ENCODE measurements at regions of chr11 and their contacts with region 1.

Region 1: GRCh38 chr11:45846974-45847910 is at the start of gene CRY2:
- DNase-seq: peak; percentile 99 to 100 (median 100)
- H3K4me3 ChIP-seq: peak within 1 kb of the TSS; percentile 87 to 98 (median 93)
- H3K4me3 Mint-ChIP-seq: peak within 1 kb of the TSS; percentile 85 to 86
- H3K27ac ChIP-seq: peak within 1 kb of the TSS; percentile 94 to 97
- H3K27ac Mint-ChIP-seq: peak within 1 kb of the TSS; percentile 90 to 96 (median 93)
- H3K4me1 ChIP-seq: peaks cover 40 to 41% of the 10 kb centered on the region in 2 donors
- H3K4me1 Mint-ChIP-seq: peaks cover 53% of the 10 kb centered on the region
- H3K27me3 ChIP-seq: peaks cover 0 to 3% of the 10 kb centered on the region in 2 donors
- H3K27me3 Mint-ChIP-seq: peaks cover 5 to 19% (median 9%) of the 10 kb centered on the region in 3 donors
- CTCF ChIP-seq: no peak
- polyA plus RNA-seq, gene CRY2: 5.1 to 12.5 (median 7.2) TPM

Region 2: GRCh38 chr11:45423475-45424120 is 423.6 kb before region 1 on chr11:
- intact Hi-C with region 1: no loop called
- DNase-seq: no peak
- H3K4me3 ChIP-seq: no peak overlapping the region
- H3K4me3 Mint-ChIP-seq: no peak overlapping the region
- H3K27ac ChIP-seq: no peak overlapping the region
- H3K27ac Mint-ChIP-seq: no peak overlapping the region
- H3K4me1 ChIP-seq: no peaks in the 10 kb centered on the region
- H3K4me1 Mint-ChIP-seq: no peaks in the 10 kb centered on the region
- H3K27me3 ChIP-seq: no peaks in the 10 kb centered on the region
- H3K27me3 Mint-ChIP-seq: peaks cover 14 to 22% (median 15%) of the 10 kb centered on the region in 3 donors
- CTCF ChIP-seq: no peak

Region 3: GRCh38 chr11:45804761-45805304 is 42.4 kb before region 1 on chr11 and contains the start of gene SLC35C1:
- intact Hi-C with region 1: loop called (anchors 5 kb)
- DNase-seq: peak; percentile 88 to 93 (median 89)
- H3K4me3 ChIP-seq: peak within 1 kb of the TSS; percentile 90 to 98 (median 92)
- H3K4me3 Mint-ChIP-seq: peak within 1 kb of the TSS; percentile 93 to 95
- H3K27ac ChIP-seq: peak within 1 kb of the TSS; percentile 80 to 87
- H3K27ac Mint-ChIP-seq: peak within 1 kb of the TSS; percentile 87 to 94 (median 91)
- H3K4me1 ChIP-seq: peaks cover 45 to 46% of the 10 kb centered on the region in 2 donors
- H3K4me1 Mint-ChIP-seq: peaks cover 42% of the 10 kb centered on the region
- H3K27me3 ChIP-seq: no peaks in the 10 kb centered on the region
- H3K27me3 Mint-ChIP-seq: peaks cover 0 to 7% (median 6%) of the 10 kb centered on the region in 3 donors
- CTCF ChIP-seq: no peak
- polyA plus RNA-seq, gene SLC35C1: 5.0 to 14.0 (median 12.8) TPM

Region 4: DNA sequence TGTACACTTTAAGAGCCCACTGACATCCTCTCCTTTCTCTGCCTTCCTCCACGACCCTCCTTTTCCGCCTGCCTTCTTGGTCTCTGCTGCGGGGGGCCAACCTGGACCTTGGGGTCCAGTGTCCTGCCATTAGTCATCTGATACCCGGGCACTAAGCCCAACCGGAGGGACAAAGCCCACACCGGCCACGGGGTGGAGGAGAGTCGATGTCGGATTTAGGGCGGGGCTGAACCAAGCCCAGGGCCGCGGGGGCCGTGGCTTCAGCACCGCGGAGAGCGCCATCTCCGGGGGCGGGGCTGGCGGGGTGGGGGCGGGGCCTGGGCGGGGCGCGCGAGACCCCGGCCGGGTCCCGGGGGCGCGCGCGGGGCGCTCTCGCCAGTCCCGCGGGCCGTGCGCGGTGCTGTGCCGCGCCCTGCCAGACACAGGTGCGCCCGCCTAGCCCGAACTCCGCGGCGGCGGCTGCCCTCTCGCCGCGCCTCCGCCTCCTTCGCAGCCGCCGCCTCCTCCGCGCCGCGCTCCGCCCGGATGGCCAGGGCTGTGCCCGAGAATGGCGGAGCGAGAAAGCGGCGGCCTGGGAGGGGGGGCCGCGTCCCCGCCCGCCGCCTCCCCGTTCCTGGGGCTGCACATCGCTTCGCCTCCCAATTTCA is 38.2 kb after region 1 on chr11 and contains the start of gene MAPK8IP1:
- intact Hi-C with region 1: no loop called
- DNase-seq: peak; percentile 12 to 27 (median 12)
- H3K4me3 ChIP-seq: peak within 1 kb of the TSS in 1 of 3 experiments; percentile 63
- H3K4me3 Mint-ChIP-seq: peak within 1 kb of the TSS; percentile 64 to 89
- H3K27ac ChIP-seq: no peak within 1 kb of the TSS
- H3K27ac Mint-ChIP-seq: no peak within 1 kb of the TSS
- H3K4me1 ChIP-seq: peaks cover 5 to 6% of the 10 kb centered on the region in 2 donors
- H3K4me1 Mint-ChIP-seq: peaks cover 3% of the 10 kb centered on the region
- H3K27me3 ChIP-seq: peaks cover 14 to 26% of the 10 kb centered on the region in 2 donors
- H3K27me3 Mint-ChIP-seq: peaks cover 16 to 46% (median 29%) of the 10 kb centered on the region in 3 donors
- CTCF ChIP-seq: no peak
- polyA plus RNA-seq, gene MAPK8IP1: 0.93 TPM in 1 of 3 donors, not detected in the others

Region 5: DNA sequence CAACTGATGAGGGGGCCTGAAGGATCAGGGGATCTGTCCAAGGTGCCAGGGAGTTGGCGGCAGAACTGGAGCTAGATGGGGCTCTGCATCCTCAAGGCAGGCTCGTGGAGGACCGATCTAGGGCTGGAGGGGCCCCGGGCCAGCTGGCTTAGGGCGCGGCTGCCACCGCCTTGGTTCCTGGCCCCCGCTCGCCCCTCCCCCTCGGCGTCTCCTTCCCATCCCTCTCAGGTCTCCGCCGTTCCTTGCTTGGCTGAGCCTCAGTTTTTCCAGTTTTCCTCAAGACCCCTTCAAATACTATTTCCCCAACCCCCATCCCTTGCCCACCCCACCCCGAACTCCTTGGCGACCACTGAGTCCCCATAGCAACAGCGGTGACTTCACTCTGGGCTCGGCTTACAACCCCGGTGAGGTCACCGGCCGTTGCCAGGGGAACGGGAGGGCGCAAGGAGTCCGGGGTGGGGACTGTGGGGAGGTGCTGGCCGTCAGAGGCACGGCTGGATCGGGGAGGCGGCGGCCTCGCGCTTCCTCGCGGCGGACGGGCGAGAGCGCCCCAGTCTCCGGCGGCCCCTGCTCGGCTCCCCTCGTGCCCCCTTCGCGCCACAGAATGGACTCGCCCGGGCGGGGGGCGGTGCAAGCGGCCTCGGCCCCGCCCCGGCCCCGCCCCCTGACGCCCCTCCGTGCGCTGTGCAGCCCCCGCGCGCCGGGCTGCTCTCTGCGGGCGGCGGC is 52.4 kb after region 1 on chr11:
- intact Hi-C with region 1: no loop called
- DNase-seq: peak; percentile 64 to 85 (median 73)
- H3K4me3 ChIP-seq: peak overlapping the region in 2 of 3 experiments; percentile 6 to 61
- H3K4me3 Mint-ChIP-seq: peak overlapping the region; percentile 62 to 79
- H3K27ac ChIP-seq: no peak overlapping the region
- H3K27ac Mint-ChIP-seq: peak overlapping the region in 5 of 7 donors; percentile 67 to 93 (median 77)
- H3K4me1 ChIP-seq: peaks cover 11 to 15% of the 10 kb centered on the region in 2 donors
- H3K4me1 Mint-ChIP-seq: peaks cover 7% of the 10 kb centered on the region
- H3K27me3 ChIP-seq: peaks cover 24 to 58% of the 10 kb centered on the region in 2 donors
- H3K27me3 Mint-ChIP-seq: peaks cover 55 to 83% (median 63%) of the 10 kb centered on the region in 3 donors
- CTCF ChIP-seq: no peak

Region 6: DNA sequence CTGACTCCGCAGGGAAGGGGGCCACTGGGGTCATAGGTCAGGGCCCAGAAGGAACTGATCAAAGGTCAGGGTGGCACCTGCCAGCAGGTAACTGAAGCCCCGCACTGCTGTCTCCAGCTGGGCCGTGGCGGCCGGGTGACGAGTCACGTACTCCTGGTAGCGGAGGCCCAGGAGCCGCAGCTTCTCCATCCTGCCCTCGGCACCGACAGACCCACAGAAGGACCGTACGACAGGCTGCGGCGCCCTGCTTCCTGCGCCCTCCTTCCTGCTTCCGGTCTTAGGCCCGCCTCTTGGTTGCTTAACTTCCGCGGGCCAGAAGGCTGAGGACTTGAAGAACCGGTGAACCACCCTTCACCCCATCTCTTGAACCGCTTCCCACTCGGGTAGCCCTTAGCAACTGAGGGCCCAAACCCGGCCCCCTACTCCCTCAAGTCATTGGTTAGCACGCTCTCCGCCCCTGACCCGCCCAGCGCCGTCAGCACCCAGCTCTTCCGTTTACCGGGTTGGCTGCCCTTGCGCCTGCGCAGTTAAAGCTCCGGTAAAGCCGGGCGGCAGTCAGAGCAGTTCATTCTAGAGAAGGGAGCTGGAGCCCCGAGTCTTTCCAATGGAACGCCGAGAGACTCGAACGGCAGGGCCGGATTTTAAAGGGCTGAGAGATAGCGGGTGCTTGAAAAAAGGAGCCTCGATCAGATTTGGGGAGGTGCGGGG is 70.5 kb after region 1 on chr11 and contains the start of gene PEX16:
- intact Hi-C with region 1: loop called (anchors 5 kb)
- DNase-seq: peak; percentile 99
- H3K4me3 ChIP-seq: peak within 1 kb of the TSS; percentile 71 to 91 (median 82)
- H3K4me3 Mint-ChIP-seq: peak within 1 kb of the TSS; percentile 97 to 98
- H3K27ac ChIP-seq: peak within 1 kb of the TSS; percentile 93 to 96
- H3K27ac Mint-ChIP-seq: peak within 1 kb of the TSS; percentile 96 to 99 (median 98)
- H3K4me1 ChIP-seq: peaks cover 16 to 28% of the 10 kb centered on the region in 2 donors
- H3K4me1 Mint-ChIP-seq: peaks cover 29% of the 10 kb centered on the region
- H3K27me3 ChIP-seq: peaks cover 6 to 15% of the 10 kb centered on the region in 2 donors
- H3K27me3 Mint-ChIP-seq: peaks cover 7 to 17% (median 14%) of the 10 kb centered on the region in 3 donors
- CTCF ChIP-seq: no peak
- polyA plus RNA-seq, gene PEX16: 33.8 to 46.1 (median 35.1) TPM

Measured in CD14-positive monocyte (primary cell).